Pancreas (tissue), 10 donors: ENCODE measurements at regions of chr17 and their contacts with region 1.

Region 1: DNA sequence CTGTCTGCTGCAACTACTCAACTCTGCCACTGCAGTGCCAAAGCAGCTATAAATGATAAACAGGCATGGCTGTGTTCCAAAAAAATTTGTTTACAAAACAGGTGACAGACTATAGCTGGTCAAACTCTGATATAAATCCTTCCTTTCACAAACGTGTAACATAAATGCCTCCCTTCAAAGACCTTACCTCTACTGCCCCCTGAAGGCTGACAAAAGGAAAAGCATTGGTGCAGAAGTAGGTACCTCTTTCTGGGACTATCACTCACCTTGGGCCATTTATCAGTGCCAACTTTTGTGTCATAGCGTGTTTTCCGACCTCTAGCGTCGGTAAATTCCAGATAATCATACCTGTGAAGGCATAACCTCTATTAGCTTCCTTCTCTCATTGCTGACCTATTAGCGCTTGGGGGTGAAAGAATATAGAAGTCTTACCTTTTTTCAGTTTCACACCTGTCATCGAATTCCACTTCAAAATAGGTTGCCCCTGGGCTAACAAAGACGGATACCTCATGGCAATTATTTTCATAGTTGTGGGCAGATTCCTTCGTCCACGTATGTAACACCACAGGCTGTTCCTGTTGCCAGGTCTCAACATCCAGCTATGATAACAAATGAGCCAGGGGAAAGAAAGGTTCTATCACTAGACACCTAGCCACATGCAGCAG is 67.9 kb downstream of the ZZEF1 start:
- DNase-seq: peak in 3 of 6 donors; percentile 33 to 43 (median 33)
- ATAC-seq: peak; percentile 79 to 88 (median 86)
- H3K4me3 ChIP-seq: no peak overlapping the region
- H3K27ac ChIP-seq: peak overlapping the region in 2 of 4 donors; percentile 47 to 81
- H3K4me1 ChIP-seq: peaks cover 8 to 30% (median 22%) of the 10 kb centered on the region in 3 donors
- H3K27me3 ChIP-seq: no peaks in the 10 kb centered on the region
- CTCF ChIP-seq: peak; percentile 44 to 67 (median 64)

Region 2: DNA sequence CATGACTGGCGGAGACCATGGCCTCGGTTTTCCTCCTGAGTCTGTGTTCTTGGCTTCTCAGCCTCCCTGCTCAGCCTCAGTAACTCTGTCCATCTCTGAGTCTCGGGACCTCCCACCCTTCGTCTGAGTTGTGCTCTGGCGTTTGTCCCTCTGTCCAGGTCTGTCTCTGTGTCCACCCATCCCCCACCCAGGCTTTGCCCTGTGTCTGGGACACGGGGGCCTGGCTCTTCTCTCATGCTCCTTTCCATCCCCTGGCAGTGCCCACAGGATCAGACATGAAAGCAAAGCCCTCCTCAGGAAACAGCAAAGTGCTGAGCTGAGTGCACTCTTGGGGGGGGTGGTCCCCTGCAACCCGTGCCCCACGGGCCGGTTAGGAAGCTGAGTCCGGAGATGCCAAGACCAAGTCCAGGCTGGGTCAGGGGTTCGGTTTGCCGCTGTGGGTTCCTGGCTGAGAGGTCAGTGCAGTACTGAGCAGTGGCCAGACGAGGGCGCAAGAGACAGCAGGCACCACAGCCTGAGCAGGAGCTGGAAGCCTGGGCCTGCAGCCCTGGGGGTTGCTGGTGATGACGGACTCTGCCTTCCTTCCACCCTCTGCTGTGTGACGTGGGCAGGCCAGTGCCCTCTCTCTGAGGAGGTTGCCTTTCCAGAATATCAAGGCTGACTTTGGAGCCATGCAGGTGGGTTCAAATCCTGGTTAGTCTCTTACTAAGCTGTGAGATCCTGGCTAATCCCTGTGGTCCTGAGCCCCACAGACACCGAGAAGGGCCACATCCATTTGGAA is 161.2 kb before region 1 on chr17:
- intact Hi-C with region 1: loop called in 2 of 3 experiments (anchors 5 to 10 kb)
- DNase-seq: peak; percentile 61 to 94 (median 82)
- ATAC-seq: peak; percentile 85 to 92 (median 91)
- H3K4me3 ChIP-seq: no peak overlapping the region
- H3K27ac ChIP-seq: no peak overlapping the region
- H3K4me1 ChIP-seq: peaks cover 0 to 3% (median 0%) of the 10 kb centered on the region in 3 donors
- H3K27me3 ChIP-seq: no peaks in the 10 kb centered on the region
- CTCF ChIP-seq: peak; percentile 92 to 98 (median 94)

Region 3: DNA sequence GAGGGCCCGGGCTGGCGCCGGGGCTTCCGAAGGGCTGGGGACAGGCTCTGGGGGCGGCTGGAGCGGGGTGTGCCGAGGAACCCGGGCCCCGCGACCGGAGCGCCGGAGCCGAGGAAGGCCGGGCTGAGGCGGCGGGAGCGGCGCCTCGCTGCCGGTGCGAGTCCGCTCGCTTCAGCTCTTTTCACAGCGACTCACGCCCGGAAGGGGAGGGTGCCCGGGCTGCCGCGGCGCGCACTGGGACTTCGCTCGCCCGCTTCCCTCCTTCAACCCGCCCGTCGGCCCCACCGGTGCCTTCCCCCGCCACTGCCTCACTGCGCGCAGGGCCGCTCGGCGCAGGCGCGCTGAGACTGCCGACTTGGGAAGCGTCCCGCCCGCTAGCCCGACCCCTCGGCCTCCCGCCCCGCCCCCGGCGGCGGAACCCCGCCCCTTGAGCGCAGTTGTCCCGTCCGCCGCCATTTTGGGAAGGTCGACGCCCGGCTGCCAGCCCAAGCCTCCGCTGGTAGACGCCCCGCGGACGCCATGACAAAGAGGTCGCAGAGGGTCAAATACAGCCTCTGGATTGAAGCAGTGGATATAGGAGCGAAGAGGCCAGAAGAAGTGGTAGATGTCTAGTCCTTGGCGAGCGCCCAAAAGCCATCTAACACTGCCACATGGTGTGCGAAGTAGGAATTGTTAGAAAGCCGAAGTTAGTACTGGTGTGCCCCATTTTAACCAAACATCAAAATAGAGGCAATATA is 291.5 kb after region 1 on chr17 and contains the start of gene UBE2G1:
- intact Hi-C with region 1: no loop called
- DNase-seq: peak; percentile 97 to 100 (median 99)
- ATAC-seq: peak; percentile 90 to 96 (median 91)
- H3K4me3 ChIP-seq: peak within 1 kb of the TSS; percentile 93 to 99 (median 98)
- H3K27ac ChIP-seq: peak within 1 kb of the TSS; percentile 84 to 95 (median 91)
- H3K4me1 ChIP-seq: peaks cover 4 to 10% (median 4%) of the 10 kb centered on the region in 3 donors
- H3K27me3 ChIP-seq: no peaks in the 10 kb centered on the region
- CTCF ChIP-seq: no peak
- total RNA-seq, gene UBE2G1: 19.7 to 29.3 (median 23.7) TPM